HepG2 (cell line): ENCODE measurements at regions of chr19 and their contacts with region 1.

Region 1: DNA sequence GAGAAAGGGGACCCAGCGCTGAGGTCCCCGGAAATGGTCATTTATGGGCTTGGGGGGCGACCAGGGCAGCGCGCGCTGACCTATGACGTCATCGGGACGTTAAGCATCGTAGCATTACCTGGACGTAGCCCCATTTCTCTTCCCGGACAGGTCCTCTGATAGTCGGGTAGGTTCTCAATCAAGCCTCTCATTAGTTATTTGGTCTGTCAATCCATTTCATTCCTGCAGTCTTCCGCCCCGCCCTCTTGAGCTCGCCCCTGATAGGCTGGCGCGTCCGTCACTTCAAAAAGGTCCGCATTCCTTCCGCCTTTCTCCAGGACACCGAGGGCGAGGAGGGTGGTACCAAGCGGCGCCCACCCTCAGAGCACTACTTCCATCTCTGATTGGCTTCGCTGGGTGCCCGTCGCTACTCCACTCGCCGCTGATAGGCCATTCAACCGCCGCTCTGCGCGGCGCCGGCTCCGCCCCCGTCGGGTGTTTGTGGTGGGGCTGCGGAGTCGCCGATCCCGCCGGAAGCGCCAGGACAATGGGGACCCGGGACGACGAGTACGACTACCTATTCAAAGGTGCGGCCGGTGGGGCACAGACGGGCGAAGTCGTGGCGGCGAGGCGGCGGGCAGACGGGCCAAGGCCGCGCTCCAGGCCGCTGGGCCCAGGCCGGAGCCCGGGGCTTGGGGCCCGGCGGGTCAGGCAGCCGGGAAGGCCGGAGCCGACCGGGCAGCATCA is at the start of gene RAB11B:
- DNase-seq: peak; percentile 99
- ATAC-seq: peak; percentile 92
- H3K4me3 ChIP-seq: peak within 1 kb of the TSS; percentile 84 to 86 (median 85)
- H3K27ac ChIP-seq: peak within 1 kb of the TSS; percentile 96
- H3K4me1 ChIP-seq: peaks cover 87% of the 10 kb centered on the region
- H3K27me3 ChIP-seq: no peaks in the 10 kb centered on the region
- CTCF ChIP-seq: no peak
- EP300 ChIP-seq: 0 out of 4 replicates have a peak, but pooled peaks have one; percentile 4 to 8
- POLR2A ChIP-seq: peak; percentile 50 to 77
- RAD21 ChIP-seq: peak; percentile 51; the same call in 1 of the 2 replicates
- total RNA-seq, gene RAB11B: 6.0 and 11.5 TPM in 2 replicates

Region 2: GRCh38 chr19:8321060-8321985 is 68.7 kb before region 1 on chr19 and contains the starts of genes NDUFA7 and RPS28:
- CTCF ChIA-PET with region 1: no interaction called
- POLR2A ChIA-PET with region 1: interaction called, 11 read pairs
- in situ Hi-C with region 1: no loop called
- intact Hi-C with region 1: no loop called
- DNase-seq: peak; percentile 85
- ATAC-seq: peak; percentile 81
- H3K4me3 ChIP-seq: peak within 1 kb of the TSS; percentile 69 to 97 (median 82)
- H3K27ac ChIP-seq: peak within 1 kb of the TSS; percentile 88
- H3K4me1 ChIP-seq: peaks cover 36% of the 10 kb centered on the region
- H3K27me3 ChIP-seq: no peaks in the 10 kb centered on the region; a peak in 1 of 5 replicates
- CTCF ChIP-seq: peak; percentile 79
- EP300 ChIP-seq: no peak
- POLR2A ChIP-seq: peak; percentile 90 to 92
- RAD21 ChIP-seq: peak; percentile 58
- total RNA-seq, gene NDUFA7: 57.2 and 64.5 TPM in 2 replicates
- total RNA-seq, gene RPS28: 281 and 319 TPM in 2 replicates

Region 3: DNA sequence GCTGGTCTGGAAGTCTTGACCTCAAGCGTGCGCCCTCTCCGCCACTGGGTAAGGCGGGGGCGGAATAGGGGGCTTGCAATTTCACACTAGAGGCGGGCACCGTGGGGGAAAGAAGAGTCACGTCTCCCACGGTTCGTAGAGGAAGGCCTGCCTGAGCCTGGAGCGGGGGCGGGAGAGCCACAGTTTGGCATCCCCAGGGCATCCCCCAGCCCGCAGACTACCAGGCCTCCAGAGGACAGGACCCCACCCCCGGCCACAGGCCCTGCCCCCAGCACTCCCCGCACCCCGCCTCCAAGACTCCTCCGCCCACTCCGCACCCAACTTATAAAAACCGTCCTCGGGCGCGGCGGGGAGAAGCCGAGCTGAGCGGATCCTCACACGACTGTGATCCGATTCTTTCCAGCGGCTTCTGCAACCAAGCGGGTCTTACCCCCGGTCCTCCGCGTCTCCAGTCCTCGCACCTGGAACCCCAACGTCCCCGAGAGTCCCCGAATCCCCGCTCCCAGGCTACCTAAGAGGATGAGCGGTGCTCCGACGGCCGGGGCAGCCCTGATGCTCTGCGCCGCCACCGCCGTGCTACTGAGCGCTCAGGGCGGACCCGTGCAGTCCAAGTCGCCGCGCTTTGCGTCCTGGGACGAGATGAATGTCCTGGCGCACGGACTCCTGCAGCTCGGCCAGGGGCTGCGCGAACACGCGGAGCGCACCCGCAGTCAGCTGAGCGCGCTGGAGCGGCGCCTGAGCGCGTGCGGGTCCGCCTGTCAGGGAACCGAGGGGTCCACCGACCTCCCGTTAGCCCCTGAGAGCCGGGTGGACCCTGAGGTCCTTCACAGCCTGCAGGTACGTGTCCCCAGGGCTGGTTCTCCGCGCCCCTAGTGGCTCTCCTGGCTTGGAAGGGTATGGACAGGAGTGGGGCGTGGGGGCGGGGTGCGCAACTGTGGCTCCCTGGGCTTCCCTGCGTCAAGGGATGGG is 26.0 kb before region 1 on chr19 and contains the start of gene ANGPTL4:
- CTCF ChIA-PET with region 1: no interaction called
- POLR2A ChIA-PET with region 1: interaction called, 33 read pairs
- in situ Hi-C with region 1: no loop called
- intact Hi-C with region 1: no loop called
- DNase-seq: no peak
- ATAC-seq: peak; percentile 67
- H3K4me3 ChIP-seq: peak within 1 kb of the TSS; percentile 56 to 79 (median 74); a peak in 5 of 6 replicates
- H3K27ac ChIP-seq: peak within 1 kb of the TSS; percentile 64
- H3K4me1 ChIP-seq: peaks cover 67% of the 10 kb centered on the region
- H3K27me3 ChIP-seq: peaks cover 0 to 3% of the 10 kb centered on the region in 2 experiments; a peak in 1 of 5 replicates
- CTCF ChIP-seq: peak; percentile 4; the same call in 1 of the 2 replicates
- EP300 ChIP-seq: no peak
- POLR2A ChIP-seq: peak; percentile 61 to 92; a peak in 3 of 4 replicates
- RAD21 ChIP-seq: no peak
- total RNA-seq, gene ANGPTL4: 0.20 and 0.80 TPM in 2 replicates

Region 4: GRCh38 chr19:8412783-8413628 is 23.0 kb after region 1 on chr19 and contains the start of gene MARCHF2:
- CTCF ChIA-PET with region 1: no interaction called
- POLR2A ChIA-PET with region 1: interaction called, 19 read pairs
- in situ Hi-C with region 1: no loop called
- intact Hi-C with region 1: no loop called
- DNase-seq: peak; percentile 90
- ATAC-seq: peak; percentile 98
- H3K4me3 ChIP-seq: peak within 1 kb of the TSS; percentile 67 to 92 (median 70)
- H3K27ac ChIP-seq: no peak within 1 kb of the TSS
- H3K4me1 ChIP-seq: peaks cover 30% of the 10 kb centered on the region
- H3K27me3 ChIP-seq: no peaks in the 10 kb centered on the region
- CTCF ChIP-seq: peak; percentile 70
- EP300 ChIP-seq: 0 out of 4 replicates have a peak, but pooled peaks of 1 of the 2 experiments have one; percentile 22
- POLR2A ChIP-seq: peak in 1 of 2 experiments; percentile 28; a peak in 1 of 4 replicates
- RAD21 ChIP-seq: peak; percentile 57
- total RNA-seq, gene MARCHF2: 10.6 and 12.7 TPM in 2 replicates

Region 5: DNA sequence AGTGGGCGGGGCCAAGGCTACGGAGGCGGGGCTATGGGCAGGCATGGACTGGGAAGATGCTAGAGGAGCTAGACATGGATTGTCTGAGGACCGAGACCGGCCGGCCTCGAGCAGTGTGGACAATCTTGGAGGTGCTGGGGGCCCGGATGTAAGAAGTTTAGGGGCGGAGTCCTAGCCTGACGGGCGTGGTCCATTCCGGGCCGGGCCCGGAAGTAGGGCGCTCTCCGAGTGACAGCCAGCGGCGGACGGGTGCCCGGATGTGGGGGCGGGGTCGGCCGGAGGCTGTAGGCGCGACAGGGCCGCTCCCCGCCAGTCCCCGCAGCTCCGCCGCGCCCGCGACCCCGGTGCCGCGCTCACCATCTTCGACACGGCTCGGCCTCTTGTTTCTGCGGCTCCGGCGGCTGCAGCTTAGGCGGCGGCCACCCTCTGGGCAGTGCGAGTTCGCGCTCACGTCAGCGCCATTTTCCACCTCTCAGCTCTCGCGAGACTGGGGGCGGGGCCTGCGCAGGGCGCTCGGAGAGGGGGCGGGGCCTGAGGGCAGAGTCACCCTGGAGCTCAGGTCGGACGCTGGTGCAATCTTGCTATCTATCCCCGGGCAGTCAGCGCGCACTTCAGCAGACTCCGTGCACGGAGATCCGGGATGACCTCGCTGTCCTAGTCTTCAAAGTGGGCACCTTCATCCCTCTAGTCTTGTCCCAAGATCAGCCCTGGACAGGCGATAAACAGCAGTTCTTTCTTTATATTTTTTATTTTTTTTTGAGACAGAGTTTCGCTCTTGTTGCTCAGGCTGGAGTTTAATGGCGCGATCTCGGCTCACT is 123.8 kb after region 1 on chr19 and contains the start of gene ZNF414:
- CTCF ChIA-PET with region 1: no interaction called
- POLR2A ChIA-PET with region 1: interaction called, 10 read pairs
- in situ Hi-C with region 1: no loop called
- intact Hi-C with region 1: no loop called
- DNase-seq: peak; percentile 83
- ATAC-seq: peak; percentile 87
- H3K4me3 ChIP-seq: peak within 1 kb of the TSS; percentile 89 to 95 (median 90)
- H3K27ac ChIP-seq: peak within 1 kb of the TSS; percentile 94
- H3K4me1 ChIP-seq: peaks cover 42% of the 10 kb centered on the region
- H3K27me3 ChIP-seq: 0 out of 5 replicates have a peak, but pooled peaks cover 0 to 2% of the 10 kb centered on the region in 2 experiments
- CTCF ChIP-seq: no peak
- EP300 ChIP-seq: no peak
- POLR2A ChIP-seq: peak; percentile 90 to 98
- RAD21 ChIP-seq: peak; percentile 67
- total RNA-seq, gene ZNF414: 1.4 and 2.5 TPM in 2 replicates

Region 6: GRCh38 chr19:8592231-8593009 is 202.4 kb after region 1 on chr19:
- CTCF ChIA-PET with region 1: no interaction called
- POLR2A ChIA-PET with region 1: no interaction called
- in situ Hi-C with region 1: no loop called
- intact Hi-C with region 1: no loop called
- DNase-seq: no peak
- ATAC-seq: peak; percentile 63
- H3K4me3 ChIP-seq: peak overlapping the region in 1 of 3 experiments; percentile 41; a peak in 2 of 6 replicates
- H3K27ac ChIP-seq: no peak overlapping the region
- H3K4me1 ChIP-seq: no peaks in the 10 kb centered on the region
- H3K27me3 ChIP-seq: peaks cover 2 to 3% of the 10 kb centered on the region in 2 experiments; a peak in 1 of 5 replicates
- CTCF ChIP-seq: no peak
- EP300 ChIP-seq: no peak
- POLR2A ChIP-seq: no peak
- RAD21 ChIP-seq: no peak